Breast epithelium (tissue), 4 donors: ENCODE measurements at regions of chr10 and their contacts with region 1.

Region 1: GRCh38 chr10:725786-726185 is 36.3 kb upstream of the DIP2C start:
- DNase-seq: no peak
- H3K4me3 ChIP-seq: no peak overlapping the region
- H3K27ac ChIP-seq: no peak overlapping the region
- H3K4me1 ChIP-seq: no peaks in the 10 kb centered on the region
- H3K27me3 ChIP-seq: no peaks in the 10 kb centered on the region
- CTCF ChIP-seq: no peak
- POLR2A ChIP-seq: no peak

Region 2: GRCh38 chr10:878333-878759 is 152.6 kb after region 1 on chr10:
- intact Hi-C with region 1: loop called (anchors 10 kb)
- DNase-seq: no peak
- H3K4me3 ChIP-seq: no peak overlapping the region
- H3K27ac ChIP-seq: peak overlapping the region in 1 of 2 donors; percentile 83
- H3K4me1 ChIP-seq: no peaks in the 10 kb centered on the region
- H3K27me3 ChIP-seq: no peaks in the 10 kb centered on the region
- CTCF ChIP-seq: no peak
- POLR2A ChIP-seq: no peak